CD14-positive monocyte (primary cell): ENCODE measurements at regions of chrX and their contacts with region 1.

Region 1: GRCh38 chrX:123960042-123960611 is 1.4 kb upstream of the STAG2 start:
- DNase-seq: peak; percentile 86 to 93 (median 91)
- H3K4me3 ChIP-seq: peak overlapping the region; percentile 84 to 94 (median 92)
- H3K4me3 Mint-ChIP-seq: peak overlapping the region; percentile 93 to 96
- H3K27ac ChIP-seq: peak overlapping the region; percentile 95 to 100
- H3K27ac Mint-ChIP-seq: peak overlapping the region; percentile 97 to 99 (median 98)
- H3K4me1 ChIP-seq: peaks cover 4 to 9% of the 10 kb centered on the region in 2 donors
- H3K4me1 Mint-ChIP-seq: peaks cover 14% of the 10 kb centered on the region
- H3K27me3 ChIP-seq: no peaks in the 10 kb centered on the region
- H3K27me3 Mint-ChIP-seq: peaks cover 0 to 20% (median 1%) of the 10 kb centered on the region in 3 donors
- CTCF ChIP-seq: peak; percentile 76

Region 2: DNA sequence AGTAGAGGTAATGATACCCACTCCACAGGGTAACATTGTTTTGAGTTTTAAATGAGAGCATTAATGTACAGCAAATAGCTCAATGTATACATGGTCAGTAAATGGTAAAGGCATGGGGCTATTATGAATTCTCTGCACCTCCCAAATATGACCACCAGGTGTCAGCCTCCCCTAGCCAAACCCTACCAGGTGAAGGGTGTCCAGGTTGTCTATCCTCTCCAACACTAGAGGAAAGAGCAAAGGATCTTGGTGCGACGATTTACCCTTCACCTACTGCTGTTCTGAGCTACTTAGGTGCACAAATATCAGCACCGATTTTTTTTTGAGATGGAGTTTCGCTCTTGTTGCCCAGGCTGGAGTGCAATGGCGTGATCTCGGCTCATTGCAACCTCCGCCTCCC is 126.7 kb before region 1 on chrX:
- intact Hi-C with region 1: loop called in 1 of 2 experiments (anchors 10 kb)
- DNase-seq: peak; percentile 38 to 55 (median 53)
- H3K4me3 ChIP-seq: no peak overlapping the region
- H3K4me3 Mint-ChIP-seq: no peak overlapping the region
- H3K27ac ChIP-seq: no peak overlapping the region
- H3K27ac Mint-ChIP-seq: no peak overlapping the region
- H3K4me1 ChIP-seq: peaks cover 7 to 12% of the 10 kb centered on the region in 2 donors
- H3K4me1 Mint-ChIP-seq: peaks cover 8% of the 10 kb centered on the region
- H3K27me3 ChIP-seq: no peaks in the 10 kb centered on the region
- H3K27me3 Mint-ChIP-seq: peaks cover 1 to 4% (median 3%) of the 10 kb centered on the region in 3 donors
- CTCF ChIP-seq: peak; percentile 74

Region 3: DNA sequence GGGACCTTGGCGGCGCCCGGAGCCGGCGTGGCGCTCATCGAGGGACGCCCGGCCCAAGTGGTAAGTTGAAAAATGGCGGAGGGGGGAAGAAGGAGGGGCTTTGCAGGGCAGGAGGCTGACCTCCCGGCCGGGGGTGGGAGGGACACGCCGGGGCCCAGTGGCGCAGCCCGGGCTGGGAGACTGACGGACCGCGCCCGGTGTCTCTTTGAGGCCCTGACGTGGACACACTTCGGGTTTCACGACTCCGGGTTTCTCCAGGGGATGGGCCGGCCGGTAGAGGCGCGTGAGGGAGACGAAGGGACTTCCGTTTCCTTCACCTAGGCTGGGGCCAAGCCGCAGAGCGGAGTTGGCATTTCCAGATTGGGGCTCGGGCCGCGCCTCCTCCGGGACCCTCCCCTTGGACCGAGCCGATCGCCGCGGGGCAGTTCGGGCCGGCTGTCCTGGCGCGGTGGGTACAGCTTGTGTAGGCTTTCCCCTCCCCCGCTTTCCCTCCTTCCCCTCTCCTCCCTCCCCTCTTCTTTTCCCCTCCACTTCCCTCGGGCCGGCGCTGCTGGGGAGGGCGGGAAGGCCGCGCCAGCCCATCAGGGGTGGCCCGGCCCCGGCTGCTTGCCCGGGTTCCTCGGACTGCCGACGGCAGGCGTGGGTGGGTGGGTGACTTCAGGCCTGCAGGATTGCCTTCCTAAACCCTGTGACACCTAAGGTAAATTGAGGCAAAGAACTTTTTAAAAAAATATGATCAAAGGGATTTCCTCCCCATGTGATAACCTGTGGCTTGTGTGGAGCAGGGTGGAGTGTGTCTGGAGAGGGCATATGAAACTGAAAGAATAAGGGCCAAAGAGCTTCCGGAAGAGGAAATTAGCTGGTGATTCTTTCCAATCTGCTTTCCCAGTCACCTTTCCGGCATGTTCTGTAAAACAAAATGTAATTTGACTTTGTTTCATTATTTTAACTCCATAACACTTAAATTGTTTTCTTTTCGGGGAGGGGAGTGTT is 100.0 kb before region 1 on chrX and contains the start of gene XIAP:
- intact Hi-C with region 1: loop called in 1 of 2 experiments (anchors 10 kb)
- DNase-seq: peak; percentile 67 to 86 (median 84)
- H3K4me3 ChIP-seq: peak within 1 kb of the TSS; percentile 77 to 89 (median 87)
- H3K4me3 Mint-ChIP-seq: peak within 1 kb of the TSS; percentile 83 to 86
- H3K27ac ChIP-seq: peak within 1 kb of the TSS; percentile 92 to 99
- H3K27ac Mint-ChIP-seq: peak within 1 kb of the TSS; percentile 93 to 97 (median 95)
- H3K4me1 ChIP-seq: peaks cover 15 to 22% of the 10 kb centered on the region in 2 donors
- H3K4me1 Mint-ChIP-seq: peaks cover 11% of the 10 kb centered on the region
- H3K27me3 ChIP-seq: no peaks in the 10 kb centered on the region
- H3K27me3 Mint-ChIP-seq: peaks cover 2 to 7% (median 3%) of the 10 kb centered on the region in 3 donors
- CTCF ChIP-seq: no peak
- polyA plus RNA-seq, gene XIAP: 2.1 to 10.0 (median 5.8) TPM

Region 4: GRCh38 chrX:123976706-123977316 is 16.7 kb after region 1 on chrX:
- intact Hi-C with region 1: loop called in 1 of 2 experiments (anchors 2 kb)
- DNase-seq: peak; percentile 32 to 49 (median 45)
- H3K4me3 ChIP-seq: no peak overlapping the region
- H3K4me3 Mint-ChIP-seq: no peak overlapping the region
- H3K27ac ChIP-seq: peak overlapping the region in 1 of 2 donors; percentile 43
- H3K27ac Mint-ChIP-seq: peak overlapping the region in 3 of 7 donors; percentile 8 to 61 (median 60)
- H3K4me1 ChIP-seq: peaks cover 19 to 31% of the 10 kb centered on the region in 2 donors
- H3K4me1 Mint-ChIP-seq: peaks cover 22% of the 10 kb centered on the region
- H3K27me3 ChIP-seq: no peaks in the 10 kb centered on the region
- H3K27me3 Mint-ChIP-seq: peaks cover 0 to 3% (median 0%) of the 10 kb centered on the region in 3 donors
- CTCF ChIP-seq: peak; percentile 31

Region 5: DNA sequence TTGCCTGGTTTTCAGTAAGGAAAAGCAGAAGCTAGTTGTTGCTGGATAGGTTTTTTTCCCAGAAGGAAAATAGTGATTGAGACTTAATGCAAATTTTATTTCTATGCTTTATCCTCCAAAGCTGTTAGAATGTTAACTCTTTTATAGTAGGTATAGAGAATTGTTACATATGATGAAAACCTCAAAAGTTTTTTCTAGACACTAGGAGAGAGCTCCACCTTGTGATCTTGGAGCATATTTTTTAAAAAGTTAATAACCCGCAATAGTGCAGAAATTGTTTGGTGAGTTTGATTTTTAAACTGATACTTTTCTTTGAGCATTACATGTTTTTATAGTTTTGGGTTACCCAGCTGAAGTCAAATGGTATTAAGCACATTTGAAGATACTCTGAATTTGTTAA is 57.9 kb after region 1 on chrX:
- intact Hi-C with region 1: loop called in 1 of 2 experiments (anchors 10 kb)
- DNase-seq: no peak
- H3K4me3 ChIP-seq: no peak overlapping the region
- H3K4me3 Mint-ChIP-seq: no peak overlapping the region
- H3K27ac ChIP-seq: no peak overlapping the region
- H3K27ac Mint-ChIP-seq: peak overlapping the region in 1 of 7 donors; percentile 73
- H3K4me1 ChIP-seq: no peaks in the 10 kb centered on the region
- H3K4me1 Mint-ChIP-seq: peaks cover 3% of the 10 kb centered on the region
- H3K27me3 ChIP-seq: no peaks in the 10 kb centered on the region
- H3K27me3 Mint-ChIP-seq: peaks cover 0 to 1% (median 0%) of the 10 kb centered on the region in 3 donors
- CTCF ChIP-seq: peak; percentile 22

Region 6: GRCh38 chrX:124791492-124792095 is 831.5 kb after region 1 on chrX:
- intact Hi-C with region 1: no loop called
- DNase-seq: no peak
- H3K4me3 ChIP-seq: no peak overlapping the region
- H3K4me3 Mint-ChIP-seq: no peak overlapping the region
- H3K27ac ChIP-seq: no peak overlapping the region
- H3K27ac Mint-ChIP-seq: no peak overlapping the region
- H3K4me1 ChIP-seq: no peaks in the 10 kb centered on the region
- H3K4me1 Mint-ChIP-seq: no peaks in the 10 kb centered on the region
- H3K27me3 ChIP-seq: no peaks in the 10 kb centered on the region
- H3K27me3 Mint-ChIP-seq: peaks cover 0 to 1% (median 0%) of the 10 kb centered on the region in 3 donors
- CTCF ChIP-seq: no peak